Naive thymus-derived CD8-positive, alpha-beta T cell (primary cell): ENCODE measurements at regions of chr5 and their contacts with region 1.

Region 1: DNA sequence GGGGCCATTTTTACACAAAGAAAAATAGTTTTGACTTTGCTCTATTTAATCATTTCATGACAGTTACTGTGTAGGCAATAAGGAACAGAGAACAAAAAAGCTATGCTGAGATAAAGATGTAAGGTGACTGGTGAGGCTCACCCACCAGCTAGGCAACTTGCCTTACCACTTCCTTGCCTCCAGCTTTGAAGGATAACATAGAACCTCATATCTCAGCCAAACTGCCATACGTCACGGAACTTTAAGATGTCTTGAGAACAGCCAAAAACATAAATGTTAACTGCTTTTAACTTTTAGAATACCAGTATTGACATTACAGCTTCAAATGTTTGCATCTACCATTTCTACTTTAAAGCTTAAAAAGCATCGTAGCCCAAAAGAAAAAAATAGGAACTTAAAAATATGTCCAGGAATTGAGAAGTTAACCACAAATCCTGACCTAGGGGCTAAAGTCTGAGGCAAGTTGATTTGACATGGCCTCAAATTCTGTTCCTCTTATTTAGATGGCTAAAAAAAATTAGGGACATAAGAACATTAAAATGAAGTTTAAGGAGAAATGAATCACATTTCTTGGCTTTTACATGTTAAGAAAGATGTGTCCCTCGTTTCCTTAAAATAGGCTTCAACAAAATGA is 7.7 kb upstream of the GCNT4 start:
- DNase-seq: peak; percentile 30 to 94 (median 74)
- ATAC-seq: peak; percentile 88 to 97
- H3K4me3 Mint-ChIP-seq: peak overlapping the region; percentile 34 to 82 (median 69)
- H3K27ac Mint-ChIP-seq: peak overlapping the region; percentile 94 to 98 (median 98)
- H3K4me1 Mint-ChIP-seq: peaks cover 38 to 87% (median 81%) of the 10 kb centered on the region in 4 donors
- H3K27me3 Mint-ChIP-seq: peaks cover 0 to 5% (median 0%) of the 10 kb centered on the region in 5 donors

Region 2: DNA sequence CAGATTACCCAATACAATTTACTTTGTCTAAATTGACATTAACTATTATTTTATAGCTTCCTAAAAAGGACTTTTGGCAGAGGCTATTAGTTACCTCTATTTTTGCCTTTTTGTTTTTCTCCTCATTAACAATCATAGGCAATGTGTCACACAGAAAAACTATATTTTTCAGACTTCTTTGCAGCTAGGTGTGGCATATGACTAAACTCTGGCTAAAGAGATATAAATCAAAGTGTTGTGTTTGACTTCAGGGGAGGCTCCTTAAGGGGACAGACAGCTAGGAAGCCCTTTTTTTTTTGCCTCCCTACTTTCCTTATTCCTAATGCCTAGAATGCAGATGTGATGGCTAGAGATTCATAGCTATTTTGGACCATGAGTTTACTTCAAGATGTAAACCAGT is 12.0 kb after region 1 on chr5:
- POLR2A ChIA-PET with region 1: interaction called, 12 read pairs
- DNase-seq: no peak
- ATAC-seq: no peak
- H3K4me3 Mint-ChIP-seq: no peak overlapping the region
- H3K27ac Mint-ChIP-seq: no peak overlapping the region
- H3K4me1 Mint-ChIP-seq: peaks cover 4 to 13% (median 6%) of the 10 kb centered on the region in 4 donors
- H3K27me3 Mint-ChIP-seq: no peaks in the 10 kb centered on the region